Activated CD4-positive, alpha-beta T cell treated with anti-CD3 and anti-CD28 coated beads, Interleukin-2, amount 10 ng/mL, durations not matched to agents 24 days and 14 days (primary cell): ENCODE measurements at regions of chr17 and their contacts with region 1.

Region 1: DNA sequence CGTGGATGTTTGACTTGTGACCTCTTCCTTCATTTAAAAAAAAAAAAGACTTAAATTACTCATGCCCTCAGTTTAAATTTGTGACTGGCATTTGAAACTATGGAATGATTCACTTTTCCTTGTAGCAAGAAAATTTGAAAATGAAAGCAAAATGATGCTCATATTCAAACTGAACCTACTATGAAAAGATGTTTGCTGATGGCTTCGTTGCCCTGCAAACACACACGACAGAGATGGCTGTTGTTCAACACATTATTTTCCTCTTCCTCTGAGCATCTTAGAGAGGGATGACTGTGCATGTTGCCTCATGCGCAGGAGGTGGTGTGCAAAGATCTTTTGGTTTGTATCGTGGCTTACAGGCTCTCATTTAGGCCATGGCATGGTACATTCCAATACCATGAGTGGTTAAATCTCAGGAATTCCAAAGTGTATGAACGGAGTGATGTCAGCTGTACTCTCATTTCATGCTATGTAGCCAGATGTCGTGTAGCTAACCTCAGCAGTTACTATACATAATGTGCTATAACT is 164.5 kb downstream of the PRKCA start:
- DNase-seq: peak; percentile 85
- H3K4me3 Mint-ChIP-seq: peak overlapping the region; percentile 62
- H3K27ac Mint-ChIP-seq: peak overlapping the region; percentile 93
- H3K4me1 Mint-ChIP-seq: peaks cover 57% of the 10 kb centered on the region
- H3K27me3 Mint-ChIP-seq: no peaks in the 10 kb centered on the region

Region 2: DNA sequence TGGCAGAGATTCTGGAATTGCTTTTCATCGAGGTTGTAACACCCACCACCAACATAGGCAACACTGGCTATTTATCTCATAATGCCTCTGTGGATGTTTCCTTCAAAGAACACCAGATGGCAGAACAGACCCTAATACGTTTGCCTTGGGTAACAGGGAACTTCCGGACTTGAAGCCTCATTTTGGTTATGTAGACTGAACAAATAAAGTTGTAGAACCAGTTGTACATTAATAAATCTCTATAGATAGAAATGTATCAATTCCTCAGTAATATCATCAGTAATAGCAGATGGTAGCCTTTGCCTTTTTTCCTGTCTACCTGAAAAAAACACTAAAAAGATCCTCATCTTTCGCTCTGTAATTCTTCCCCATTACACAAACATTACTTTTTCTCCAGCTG is 211.8 kb before region 1 on chr17:
- intact Hi-C with region 1: loop called (anchors 1 kb)
- DNase-seq: peak; percentile 84
- H3K4me3 Mint-ChIP-seq: peak overlapping the region; percentile 66
- H3K27ac Mint-ChIP-seq: peak overlapping the region; percentile 52
- H3K4me1 Mint-ChIP-seq: peaks cover 15% of the 10 kb centered on the region
- H3K27me3 Mint-ChIP-seq: no peaks in the 10 kb centered on the region

Region 3: DNA sequence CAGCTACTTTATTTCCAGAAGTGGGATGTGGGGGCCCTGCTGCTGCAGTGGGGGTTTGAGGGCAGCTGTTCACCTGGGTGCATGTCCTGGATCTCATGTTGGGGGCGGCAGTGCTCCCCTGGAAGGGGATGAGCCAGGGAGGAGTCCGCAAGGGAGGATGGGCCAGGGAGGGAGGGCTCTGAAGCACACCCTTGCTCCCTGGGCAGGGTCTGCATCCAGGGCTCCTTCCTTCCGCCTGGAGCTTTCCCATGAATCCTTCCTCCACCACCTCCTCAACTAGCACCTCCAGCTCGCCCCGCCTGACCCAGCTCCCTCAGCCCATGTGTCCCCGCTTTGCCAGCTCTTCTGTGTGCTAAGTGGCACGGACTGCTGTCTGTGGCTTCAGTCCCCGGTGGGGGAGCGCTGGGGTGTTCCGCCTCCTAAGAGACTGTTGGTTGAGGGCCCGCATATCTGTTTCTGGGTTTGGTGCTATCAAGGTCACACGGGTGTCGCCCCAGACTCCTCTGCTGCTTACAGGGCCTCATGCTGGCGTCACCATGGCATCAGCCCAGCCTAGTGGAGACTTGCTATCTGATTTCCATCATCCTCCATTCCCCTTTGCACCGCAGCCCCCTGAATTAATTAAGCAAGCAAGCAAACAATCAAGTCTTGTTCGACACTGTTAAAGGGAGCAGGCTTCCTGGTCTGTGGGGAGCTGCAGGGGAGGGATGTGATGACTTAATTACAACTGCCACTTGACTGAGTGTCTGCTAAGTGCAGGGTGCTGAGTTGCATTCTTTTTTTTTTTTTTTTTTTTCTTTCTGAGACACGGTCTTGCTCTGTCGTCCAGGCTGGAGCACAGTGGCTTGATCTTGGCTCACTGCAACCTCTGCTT is 92.7 kb before region 1 on chr17:
- intact Hi-C with region 1: loop called (anchors 5 kb)
- DNase-seq: peak; percentile 76
- H3K4me3 Mint-ChIP-seq: peak overlapping the region; percentile 64
- H3K27ac Mint-ChIP-seq: peak overlapping the region; percentile 86
- H3K4me1 Mint-ChIP-seq: peaks cover 59% of the 10 kb centered on the region
- H3K27me3 Mint-ChIP-seq: no peaks in the 10 kb centered on the region

Region 4: DNA sequence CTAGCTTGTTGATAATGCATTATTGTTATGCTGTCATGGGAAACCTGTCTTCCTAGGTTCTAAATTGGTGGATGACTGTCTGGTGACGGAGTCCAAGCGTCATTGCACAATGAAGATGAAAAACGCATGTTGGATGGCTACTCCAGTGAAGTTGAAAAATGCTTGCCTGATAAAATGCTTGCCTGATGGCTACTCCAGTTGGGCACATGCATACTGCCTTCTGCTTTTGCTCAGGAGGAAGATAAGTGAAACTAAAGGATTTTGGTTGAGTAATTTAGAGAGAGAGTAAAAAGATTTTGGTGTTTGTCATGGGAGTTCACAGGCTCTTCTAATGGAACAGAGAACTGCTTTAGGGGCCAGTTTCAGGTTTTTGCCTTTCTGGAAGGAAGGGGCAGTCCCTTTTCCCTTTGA is 45.9 kb before region 1 on chr17:
- intact Hi-C with region 1: loop called (anchors 5 kb)
- DNase-seq: no peak
- H3K4me3 Mint-ChIP-seq: no peak overlapping the region
- H3K27ac Mint-ChIP-seq: peak overlapping the region; percentile 14
- H3K4me1 Mint-ChIP-seq: peaks cover 61% of the 10 kb centered on the region
- H3K27me3 Mint-ChIP-seq: no peaks in the 10 kb centered on the region

Region 5: GRCh38 chr17:66508896-66509843 is 42.3 kb after region 1 on chr17:
- intact Hi-C with region 1: loop called (anchors 1 kb)
- DNase-seq: peak; percentile 78
- H3K4me3 Mint-ChIP-seq: peak overlapping the region; percentile 62
- H3K27ac Mint-ChIP-seq: peak overlapping the region; percentile 96
- H3K4me1 Mint-ChIP-seq: peaks cover 68% of the 10 kb centered on the region
- H3K27me3 Mint-ChIP-seq: no peaks in the 10 kb centered on the region

Region 6: DNA sequence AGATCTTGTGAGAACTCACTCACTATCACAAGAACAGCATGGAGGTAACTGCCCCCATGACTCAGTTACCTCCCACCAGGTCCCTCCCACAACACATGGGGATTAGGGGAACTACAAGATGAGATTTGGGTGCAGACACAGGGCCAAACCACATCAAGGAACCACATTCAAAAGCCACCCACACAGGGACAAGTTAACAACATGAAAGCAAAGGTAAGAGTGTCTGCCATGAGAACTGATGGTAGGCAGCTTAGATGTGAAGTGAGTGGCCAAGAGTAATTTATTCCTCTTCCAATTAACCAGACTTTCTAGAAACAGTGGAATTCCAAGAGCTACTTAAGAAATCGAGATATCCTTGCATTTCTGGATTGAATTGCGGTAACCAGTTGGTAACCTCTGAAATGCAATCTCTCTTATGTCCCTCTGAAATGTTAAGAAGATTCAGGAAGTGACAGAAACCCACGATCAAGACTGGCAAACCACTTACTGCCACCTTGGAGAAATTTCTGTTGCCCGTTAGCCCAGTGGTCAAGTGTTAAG is 200.7 kb after region 1 on chr17:
- intact Hi-C with region 1: loop called (anchors 2 kb)
- DNase-seq: peak; percentile 89
- H3K4me3 Mint-ChIP-seq: peak overlapping the region; percentile 73
- H3K27ac Mint-ChIP-seq: peak overlapping the region; percentile 91
- H3K4me1 Mint-ChIP-seq: peaks cover 71% of the 10 kb centered on the region
- H3K27me3 Mint-ChIP-seq: peaks cover 2% of the 10 kb centered on the region